ENCODE measurements at regions of chr3 and their contacts with region 1.

Region 1: GRCh38 chr3:98563661-98564281 is 29.6 kb downstream of the CPOX start:
- DNase-seq: peak in 4 of 5 donors; percentile 18 to 77 (median 66)
- H3K4me3 ChIP-seq: no peak overlapping the region
- H3K4me3 Mint-ChIP-seq: peak overlapping the region; percentile 61 to 86 (median 80)
- H3K27ac ChIP-seq: peak overlapping the region; percentile 77
- H3K27ac Mint-ChIP-seq: peak overlapping the region; percentile 93 to 99 (median 97)
- H3K4me1 ChIP-seq: peaks cover 72% of the 10 kb centered on the region
- H3K4me1 Mint-ChIP-seq: peaks cover 77 to 98% (median 95%) of the 10 kb centered on the region in 3 donors
- H3K27me3 ChIP-seq: no peaks in the 10 kb centered on the region
- H3K27me3 Mint-ChIP-seq: peaks cover 0 to 2% of the 10 kb centered on the region in 2 donors

Region 2: DNA sequence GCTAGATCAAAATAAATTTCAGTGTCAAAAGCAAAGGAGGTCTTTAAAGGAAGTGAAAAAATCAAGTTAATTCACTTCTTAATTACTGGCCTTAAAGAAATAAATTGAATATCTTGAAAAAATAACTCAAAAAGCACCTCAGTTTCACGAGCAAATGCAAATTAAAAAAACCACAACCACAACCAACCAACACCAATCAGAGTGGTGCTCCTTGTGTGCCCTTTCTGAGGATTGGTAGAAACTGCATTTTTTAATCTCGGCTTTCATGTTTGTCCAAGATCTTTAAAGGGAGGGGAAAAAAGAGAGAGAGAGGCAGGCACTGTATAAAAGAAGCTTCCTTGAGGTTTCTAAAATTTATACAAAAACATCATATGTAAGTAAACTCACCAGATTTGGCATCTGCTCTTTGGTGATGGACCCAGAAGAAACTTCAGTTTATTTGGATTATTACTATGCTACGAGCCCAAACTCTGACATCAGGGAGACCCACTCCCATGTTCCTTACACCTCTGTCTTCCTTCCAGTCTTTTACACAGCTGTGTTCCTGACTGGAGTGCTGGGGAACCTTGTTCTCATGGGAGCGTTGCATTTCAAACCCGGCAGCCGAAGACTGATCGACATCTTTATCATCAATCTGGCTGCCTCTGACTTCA is 32.0 kb before region 1 on chr3 and contains the start of gene GPR15:
- CTCF ChIA-PET with region 1: interaction called, 12 read pairs
- POLR2A ChIA-PET with region 1: interaction called, 21 read pairs
- DNase-seq: no peak
- H3K4me3 ChIP-seq: no peak within 1 kb of the TSS
- H3K4me3 Mint-ChIP-seq: peak within 1 kb of the TSS; percentile 47 to 84 (median 63)
- H3K27ac ChIP-seq: no peak within 1 kb of the TSS
- H3K27ac Mint-ChIP-seq: peak within 1 kb of the TSS in 6 of 8 donors; percentile 28 to 89 (median 42)
- H3K4me1 ChIP-seq: no peaks in the 10 kb centered on the region
- H3K4me1 Mint-ChIP-seq: peaks cover 21 to 64% (median 63%) of the 10 kb centered on the region in 3 donors
- H3K27me3 ChIP-seq: no peaks in the 10 kb centered on the region
- H3K27me3 Mint-ChIP-seq: no peaks in the 10 kb centered on the region
- total RNA-seq, gene GPR15: 15.6 to 17.0 TPM

Measured in CD8-positive, alpha-beta memory T cell (primary cell).